HCT116 (cell line): ENCODE measurements at regions of chr16 and their contacts with region 1.

Region 1: DNA sequence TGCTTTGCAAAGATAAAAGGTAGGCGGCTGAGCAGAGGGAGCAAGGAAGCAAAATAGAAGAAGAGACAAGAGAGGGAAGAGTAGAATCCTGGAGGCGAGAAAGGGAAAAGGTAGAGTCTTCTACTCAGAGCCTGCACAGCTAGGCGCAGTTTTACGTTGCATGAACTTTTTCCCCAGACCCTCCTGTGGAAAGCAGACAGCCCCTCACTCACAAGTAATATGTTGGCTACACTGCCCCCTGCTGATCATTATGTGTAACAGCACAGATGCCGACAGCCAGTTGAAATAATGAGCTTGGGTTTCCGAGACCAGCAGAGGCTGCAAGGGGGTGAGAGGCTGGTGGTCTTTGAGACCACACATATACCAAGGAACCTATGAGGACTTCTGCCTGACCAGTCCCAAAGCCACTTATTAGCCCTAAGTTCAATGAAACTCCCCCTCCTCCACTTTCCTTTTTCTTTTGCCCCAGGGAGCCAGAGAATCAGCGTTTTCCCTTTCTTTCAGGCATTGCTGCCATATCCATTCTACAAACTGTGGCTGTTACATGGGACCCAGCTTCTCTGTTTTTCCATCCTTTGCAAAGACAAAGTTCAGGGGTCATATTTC is 22.5 kb upstream of the CMTR2 start:
- DNase-seq: no peak
- ATAC-seq: peak; percentile 59; the same call in 1 of the 2 replicates
- H3K4me3 ChIP-seq: no peak overlapping the region
- H3K27ac ChIP-seq: no peak overlapping the region
- H3K4me1 ChIP-seq: no peaks in the 10 kb centered on the region
- H3K27me3 ChIP-seq: peaks cover 31% of the 10 kb centered on the region
- CTCF ChIP-seq: peak; percentile 62 to 92 (median 81); a peak in 5 of 6 replicates
- POLR2A ChIP-seq: no peak
- RAD21 ChIP-seq: peak; percentile 81

Region 2: GRCh38 chr16:71214746-71215381 is 96.8 kb before region 1 on chr16:
- CTCF ChIA-PET with region 1: interaction called, 5 read pairs
- POLR2A ChIA-PET with region 1: no interaction called
- RAD21 ChIA-PET with region 1: interaction called in 1 of 2 experiments, 6 read pairs
- intact Hi-C with region 1: loop called (anchors 5 kb)
- DNase-seq: peak; percentile 4
- ATAC-seq: peak; percentile 77
- H3K4me3 ChIP-seq: no peak overlapping the region
- H3K27ac ChIP-seq: no peak overlapping the region
- H3K4me1 ChIP-seq: no peaks in the 10 kb centered on the region
- H3K27me3 ChIP-seq: peaks cover 33% of the 10 kb centered on the region
- CTCF ChIP-seq: peak in 2 of 3 experiments; percentile 16 to 69; a peak in 3 of 6 replicates
- POLR2A ChIP-seq: no peak
- RAD21 ChIP-seq: peak; percentile 70

Region 3: DNA sequence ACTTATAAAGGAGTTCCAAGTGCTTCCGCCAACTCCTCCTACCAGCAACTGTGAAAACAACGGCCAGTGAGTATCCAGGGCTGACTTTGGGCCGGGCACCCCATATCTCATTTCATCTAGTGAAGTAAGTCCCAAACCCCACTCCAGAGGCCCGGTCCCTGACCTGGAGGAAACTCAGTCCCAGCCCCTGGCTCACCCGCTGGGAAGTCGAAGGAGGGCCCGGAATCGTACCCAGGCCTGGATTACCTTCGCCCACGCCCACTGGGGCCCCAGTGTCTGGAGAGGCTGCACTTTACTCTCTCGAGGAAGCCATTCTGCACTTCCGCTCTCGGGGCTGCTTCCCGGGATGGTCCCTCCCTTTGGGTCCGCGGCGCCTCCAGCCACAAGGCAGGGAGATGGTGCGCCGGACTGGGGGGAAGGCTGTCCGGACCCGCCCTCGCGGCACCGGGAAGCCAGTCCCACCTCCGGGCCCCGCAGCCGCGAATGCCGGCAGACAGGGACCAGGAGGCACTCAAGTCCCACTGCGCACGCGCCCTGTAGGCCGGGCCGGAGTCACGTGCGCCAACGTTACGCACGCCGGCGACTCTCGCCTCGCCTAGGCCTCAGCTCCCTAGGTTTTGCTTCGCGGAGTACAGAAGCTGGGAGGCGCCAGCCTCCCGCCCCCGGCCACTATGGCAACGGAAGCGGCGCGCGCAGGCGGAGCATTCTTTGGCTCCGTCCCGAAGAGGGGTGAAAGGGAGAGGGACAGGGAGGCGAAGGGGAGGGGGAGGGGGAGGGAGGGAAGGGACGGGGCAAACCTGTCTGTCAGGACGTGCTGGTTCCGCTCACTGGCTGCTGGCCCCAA is 22.5 kb before region 1 on chr16 and contains the start of gene CMTR2:
- CTCF ChIA-PET with region 1: interaction called, 12 read pairs
- POLR2A ChIA-PET with region 1: no interaction called
- RAD21 ChIA-PET with region 1: no interaction called
- intact Hi-C with region 1: no loop called
- DNase-seq: peak; percentile 95
- ATAC-seq: peak; percentile 97
- H3K4me3 ChIP-seq: peak within 1 kb of the TSS; percentile 77 to 84
- H3K27ac ChIP-seq: peak within 1 kb of the TSS; percentile 88
- H3K4me1 ChIP-seq: peaks cover 10 to 15% of the 10 kb centered on the region in 2 experiments; a peak in 3 of 4 replicates
- H3K27me3 ChIP-seq: no peaks in the 10 kb centered on the region
- CTCF ChIP-seq: no peak
- POLR2A ChIP-seq: peak; percentile 88
- RAD21 ChIP-seq: no peak; the same call in 1 of the 2 replicates
- total RNA-seq, gene CMTR2: 26.8 TPM

Region 4: DNA sequence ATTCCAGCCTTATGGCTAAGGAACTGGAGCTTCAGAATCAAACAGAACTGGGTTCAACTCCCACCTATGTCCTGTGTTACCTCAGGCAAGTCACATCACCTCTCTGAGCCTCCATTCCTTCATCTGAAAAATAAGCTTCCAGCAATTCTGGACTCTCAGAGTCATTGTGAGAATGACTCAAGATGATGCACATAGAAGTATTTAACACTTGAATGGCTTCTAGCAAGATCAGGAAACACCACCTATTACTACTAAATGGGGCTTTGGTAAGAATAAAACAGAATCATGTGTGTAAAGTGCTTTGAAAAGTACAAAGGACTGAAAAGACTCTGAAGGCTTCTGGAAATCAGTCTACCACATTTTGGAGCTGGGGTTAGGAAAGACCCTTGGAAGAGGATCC is 16.1 kb after region 1 on chr16:
- CTCF ChIA-PET with region 1: interaction called, 10 read pairs
- POLR2A ChIA-PET with region 1: no interaction called
- RAD21 ChIA-PET with region 1: no interaction called
- intact Hi-C with region 1: no loop called
- DNase-seq: no peak
- ATAC-seq: no peak
- H3K4me3 ChIP-seq: no peak overlapping the region
- H3K27ac ChIP-seq: no peak overlapping the region
- H3K4me1 ChIP-seq: no peaks in the 10 kb centered on the region
- H3K27me3 ChIP-seq: no peaks in the 10 kb centered on the region
- CTCF ChIP-seq: no peak
- POLR2A ChIP-seq: no peak
- RAD21 ChIP-seq: no peak

Region 5: GRCh38 chr16:71338193-71338592 is 26.5 kb after region 1 on chr16:
- CTCF ChIA-PET with region 1: interaction called, 17 read pairs
- POLR2A ChIA-PET with region 1: no interaction called
- RAD21 ChIA-PET with region 1: no interaction called
- intact Hi-C with region 1: no loop called
- DNase-seq: peak; percentile 80
- ATAC-seq: peak; percentile 91
- H3K4me3 ChIP-seq: peak overlapping the region; percentile 14 to 51; a peak in 3 of 4 replicates
- H3K27ac ChIP-seq: peak overlapping the region; percentile 42
- H3K4me1 ChIP-seq: peaks cover 6 to 38% of the 10 kb centered on the region in 2 experiments
- H3K27me3 ChIP-seq: no peaks in the 10 kb centered on the region
- CTCF ChIP-seq: no peak
- POLR2A ChIP-seq: no peak
- RAD21 ChIP-seq: no peak

Region 6: GRCh38 chr16:71358464-71358998 is 46.9 kb after region 1 on chr16 and contains the start of gene CALB2:
- CTCF ChIA-PET with region 1: interaction called, 12 read pairs
- POLR2A ChIA-PET with region 1: no interaction called
- RAD21 ChIA-PET with region 1: no interaction called
- intact Hi-C with region 1: no loop called
- DNase-seq: no peak
- ATAC-seq: peak; percentile 91
- H3K4me3 ChIP-seq: peak within 1 kb of the TSS; percentile 47 to 58
- H3K27ac ChIP-seq: no peak within 1 kb of the TSS
- H3K4me1 ChIP-seq: peaks cover 11 to 36% of the 10 kb centered on the region in 2 experiments
- H3K27me3 ChIP-seq: no peaks in the 10 kb centered on the region; the same call in 1 of the 2 replicates
- CTCF ChIP-seq: peak; percentile 54 to 91 (median 74)
- POLR2A ChIP-seq: no peak
- RAD21 ChIP-seq: peak; percentile 85
- total RNA-seq, gene CALB2: 5.5 TPM